ENCODE measurements at regions of chr2 and their contacts with region 1.

Region 1: GRCh38 chr2:16507655-16508489 is 157.8 kb downstream of the CYRIA start:
- DNase-seq: peak; percentile 41 to 71
- ATAC-seq: peak; percentile 92 to 98 (median 96)
- H3K4me3 ChIP-seq: peak overlapping the region; percentile 65
- H3K27ac ChIP-seq: no peak overlapping the region
- H3K4me1 ChIP-seq: peaks cover 8% of the 10 kb centered on the region
- H3K27me3 ChIP-seq: peaks cover 0 to 34% (median 0%) of the 10 kb centered on the region in 3 donors
- CTCF ChIP-seq: peak; percentile 71

Region 2: GRCh38 chr2:15645720-15646385 is 862.0 kb before region 1 on chr2:
- intact Hi-C with region 1: no loop called
- DNase-seq: no peak
- ATAC-seq: no peak
- H3K4me3 ChIP-seq: no peak overlapping the region
- H3K27ac ChIP-seq: no peak overlapping the region
- H3K4me1 ChIP-seq: no peaks in the 10 kb centered on the region
- H3K27me3 ChIP-seq: no peaks in the 10 kb centered on the region
- CTCF ChIP-seq: no peak

Region 3: DNA sequence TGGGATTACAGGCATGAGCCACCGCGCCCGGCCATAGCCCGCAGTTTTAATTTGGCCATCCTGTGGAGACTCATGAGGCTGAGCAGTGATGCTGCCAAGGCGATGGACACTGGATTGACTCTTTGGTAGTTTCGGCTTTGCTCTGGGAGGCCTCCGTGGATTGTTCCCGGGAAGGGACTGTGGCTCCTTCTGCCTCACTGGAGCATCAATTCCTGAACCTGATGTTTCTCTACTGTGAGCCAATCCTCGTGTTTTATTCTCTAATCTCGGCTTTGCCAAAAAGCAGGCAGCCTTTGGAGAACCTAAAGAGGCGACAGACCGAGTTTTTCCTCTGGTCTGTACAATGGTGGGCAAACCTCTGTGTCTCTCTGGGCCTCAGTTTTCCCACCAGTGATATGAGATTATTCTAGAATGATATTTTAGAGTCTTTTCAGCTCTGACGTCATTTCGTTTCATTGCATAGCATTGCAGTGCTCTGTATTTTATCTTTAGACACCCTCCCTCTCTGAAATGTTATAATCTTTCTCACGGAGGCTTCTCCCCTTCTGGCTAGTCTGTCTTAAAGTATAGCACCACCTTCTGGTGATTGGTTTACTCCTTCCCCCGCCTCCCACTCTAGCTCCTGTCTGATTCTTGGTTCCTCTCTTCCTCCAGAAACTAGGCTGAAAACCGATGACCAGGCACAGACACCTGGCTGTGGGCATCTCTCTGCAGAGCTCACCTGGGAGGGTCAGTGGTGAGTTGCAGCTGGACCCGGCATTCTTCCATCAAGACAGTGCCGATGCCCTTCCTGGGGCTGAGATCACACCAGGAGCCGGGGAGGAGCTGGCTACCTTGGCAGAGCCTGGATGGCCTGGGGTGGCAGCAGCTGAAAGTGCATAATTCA is 226.2 kb before region 1 on chr2:
- intact Hi-C with region 1: loop called in 1 of 2 experiments (anchors 10 kb)
- DNase-seq: no peak
- ATAC-seq: peak in 3 of 4 donors; percentile 57 to 74 (median 65)
- H3K4me3 ChIP-seq: no peak overlapping the region
- H3K27ac ChIP-seq: no peak overlapping the region
- H3K4me1 ChIP-seq: no peaks in the 10 kb centered on the region
- H3K27me3 ChIP-seq: no peaks in the 10 kb centered on the region
- CTCF ChIP-seq: peak; percentile 48

Region 4: DNA sequence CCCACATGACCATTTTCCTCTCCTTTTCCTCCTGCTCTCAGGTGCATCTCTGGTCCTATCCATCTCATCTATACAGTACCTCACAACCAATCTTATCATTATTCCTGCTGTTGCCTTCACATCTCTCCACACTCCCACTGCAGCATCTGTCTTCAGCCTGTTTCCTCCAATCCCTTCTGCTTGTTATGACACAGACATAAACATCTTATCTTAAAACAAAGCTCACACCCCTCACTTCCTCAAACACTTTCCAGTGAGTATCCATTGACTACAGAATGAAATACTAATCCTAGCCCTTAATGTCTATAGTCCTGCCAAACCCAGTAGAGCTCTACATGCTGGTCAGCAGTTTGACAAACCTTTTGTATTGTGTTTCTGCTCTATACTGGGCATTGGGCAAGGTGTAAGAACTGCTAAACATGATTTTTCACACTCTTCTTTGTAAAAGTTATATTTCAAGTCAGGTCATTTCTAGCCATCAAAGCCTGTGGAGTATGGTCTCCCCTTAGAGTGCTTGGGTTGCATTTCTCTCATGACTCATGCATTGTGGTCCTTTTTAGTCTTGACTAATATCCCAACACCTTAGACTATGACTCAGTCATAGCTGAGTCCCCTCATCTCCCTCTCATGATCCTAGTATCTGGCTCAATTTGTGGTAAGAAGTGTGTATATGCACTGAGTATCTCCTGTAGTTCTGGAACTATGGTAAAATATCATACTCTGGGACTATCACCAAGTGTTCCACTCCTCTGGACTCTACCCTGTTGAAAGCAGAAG is 29.2 kb before region 1 on chr2:
- intact Hi-C with region 1: no loop called
- DNase-seq: no peak
- ATAC-seq: no peak
- H3K4me3 ChIP-seq: no peak overlapping the region
- H3K27ac ChIP-seq: no peak overlapping the region
- H3K4me1 ChIP-seq: no peaks in the 10 kb centered on the region
- H3K27me3 ChIP-seq: no peaks in the 10 kb centered on the region
- CTCF ChIP-seq: no peak

Region 5: GRCh38 chr2:17578466-17578928 is 1070.6 kb after region 1 on chr2:
- intact Hi-C with region 1: no loop called
- DNase-seq: no peak
- ATAC-seq: no peak
- H3K4me3 ChIP-seq: no peak overlapping the region
- H3K27ac ChIP-seq: no peak overlapping the region
- H3K4me1 ChIP-seq: no peaks in the 10 kb centered on the region
- H3K27me3 ChIP-seq: no peaks in the 10 kb centered on the region
- CTCF ChIP-seq: no peak